Activated CD4-positive, alpha-beta memory T cell treated with anti-CD3 and anti-CD28 coated beads, Interleukin-2, amount 10 ng/mL, durations not matched to agents 7 days and 5 days (primary cell): ENCODE measurements at regions of chr19 and their contacts with region 1.

Region 1: DNA sequence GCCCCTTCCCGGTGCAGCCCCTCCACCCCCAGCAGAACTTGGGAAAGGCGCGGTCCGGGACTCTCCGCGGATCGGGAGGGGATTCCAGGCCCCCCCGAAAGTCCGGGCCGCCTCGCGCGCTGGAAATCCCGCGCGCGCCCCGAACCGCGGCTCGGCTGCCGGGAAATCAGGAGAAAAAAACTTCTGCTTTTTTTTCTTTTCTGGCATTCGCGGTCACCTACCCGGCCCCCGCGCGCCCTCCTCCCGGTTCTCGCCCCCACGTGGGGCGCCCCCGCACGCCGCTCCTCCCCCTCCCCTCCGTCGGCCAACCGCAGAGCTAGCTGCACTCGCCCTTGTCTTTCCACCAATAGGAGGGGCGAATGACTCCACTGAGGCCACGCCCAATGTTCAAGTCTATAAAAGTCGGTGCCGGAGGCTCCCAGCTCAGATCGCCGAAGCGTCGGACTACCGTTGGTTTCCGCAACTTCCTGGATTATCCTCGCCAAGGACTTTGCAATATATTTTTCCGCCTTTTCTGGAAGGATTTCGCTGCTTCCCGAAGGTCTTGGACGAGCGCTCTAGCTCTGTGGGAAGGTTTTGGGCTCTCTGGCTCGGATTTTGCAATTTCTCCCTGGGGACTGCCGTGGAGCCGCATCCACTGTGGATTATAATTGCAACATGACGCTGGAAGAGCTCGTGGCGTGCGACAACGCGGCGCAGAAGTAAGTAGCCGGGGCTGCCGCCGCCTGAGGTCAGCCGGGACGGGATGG is at the start of gene GADD45B:
- DNase-seq: peak; percentile 96
- H3K4me3 Mint-ChIP-seq: peak within 1 kb of the TSS; percentile 89
- H3K27ac Mint-ChIP-seq: peak within 1 kb of the TSS; percentile 83
- H3K4me1 Mint-ChIP-seq: peaks cover 22% of the 10 kb centered on the region
- H3K27me3 Mint-ChIP-seq: peaks cover 3% of the 10 kb centered on the region
- total RNA-seq, gene GADD45B: 52.2 to 54.3 TPM

Region 2: DNA sequence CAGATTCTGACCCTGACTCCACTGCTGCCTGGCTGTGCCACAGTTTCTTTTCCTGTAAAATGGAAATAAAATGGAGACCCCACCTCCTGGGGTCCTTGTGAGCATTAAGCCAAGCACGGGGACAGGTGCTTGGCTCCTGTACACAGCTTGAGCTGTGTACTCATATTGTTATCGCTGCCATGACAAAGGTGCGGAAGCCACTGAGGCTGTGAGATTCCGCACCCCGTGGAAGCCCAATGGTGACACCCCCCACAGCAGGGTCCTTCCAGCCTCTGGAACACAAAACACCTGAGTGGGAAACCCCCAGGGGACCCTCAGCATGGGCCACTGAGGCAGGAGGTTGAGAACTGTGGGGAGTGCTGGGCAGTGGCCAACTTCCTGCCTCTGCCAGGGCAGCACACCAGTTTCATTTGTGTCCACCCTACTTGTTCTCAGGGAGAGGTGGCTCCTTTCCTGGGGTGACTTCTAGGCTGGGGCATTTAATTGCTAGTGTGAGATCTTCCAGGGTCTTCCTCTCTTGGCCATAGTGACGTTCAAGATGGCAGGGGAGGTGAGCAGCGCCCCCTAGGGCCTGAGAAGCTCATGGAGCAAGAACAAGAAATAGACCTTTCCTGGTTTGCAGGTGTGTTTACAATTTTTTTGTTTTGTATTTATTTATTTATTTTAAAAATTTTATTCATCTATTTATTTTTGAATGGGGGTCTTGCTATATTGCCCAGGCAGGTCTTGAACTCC is 214.3 kb before region 1 on chr19:
- CTCF ChIA-PET with region 1: no interaction called
- POLR2A ChIA-PET with region 1: no interaction called
- DNase-seq: peak; percentile 76
- H3K4me3 Mint-ChIP-seq: no peak overlapping the region
- H3K27ac Mint-ChIP-seq: peak overlapping the region; percentile 48
- H3K4me1 Mint-ChIP-seq: peaks cover 41% of the 10 kb centered on the region
- H3K27me3 Mint-ChIP-seq: no peaks in the 10 kb centered on the region

Region 3: DNA sequence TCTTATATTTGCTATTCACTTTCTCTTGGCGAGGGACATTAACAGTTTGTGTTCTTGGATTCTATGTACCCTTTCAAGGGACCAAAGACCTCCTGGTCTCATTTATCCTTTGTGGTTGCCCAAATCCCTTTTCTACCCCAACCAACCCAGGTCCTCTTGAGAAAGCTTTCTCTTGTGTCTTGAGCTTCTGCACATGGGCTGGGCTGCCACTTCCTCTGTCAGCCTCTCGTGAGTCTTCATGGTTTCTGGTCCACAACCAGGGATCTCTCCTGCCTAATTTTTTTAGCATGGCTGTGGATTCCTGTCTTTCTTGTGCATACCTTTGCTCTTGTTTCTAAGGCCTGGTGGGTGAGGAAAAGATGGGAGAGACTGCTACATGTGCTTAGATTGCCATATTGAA is 63.4 kb before region 1 on chr19:
- CTCF ChIA-PET with region 1: no interaction called
- POLR2A ChIA-PET with region 1: no interaction called
- DNase-seq: no peak
- H3K4me3 Mint-ChIP-seq: no peak overlapping the region
- H3K27ac Mint-ChIP-seq: no peak overlapping the region
- H3K4me1 Mint-ChIP-seq: no peaks in the 10 kb centered on the region
- H3K27me3 Mint-ChIP-seq: peaks cover 5% of the 10 kb centered on the region

Region 4: DNA sequence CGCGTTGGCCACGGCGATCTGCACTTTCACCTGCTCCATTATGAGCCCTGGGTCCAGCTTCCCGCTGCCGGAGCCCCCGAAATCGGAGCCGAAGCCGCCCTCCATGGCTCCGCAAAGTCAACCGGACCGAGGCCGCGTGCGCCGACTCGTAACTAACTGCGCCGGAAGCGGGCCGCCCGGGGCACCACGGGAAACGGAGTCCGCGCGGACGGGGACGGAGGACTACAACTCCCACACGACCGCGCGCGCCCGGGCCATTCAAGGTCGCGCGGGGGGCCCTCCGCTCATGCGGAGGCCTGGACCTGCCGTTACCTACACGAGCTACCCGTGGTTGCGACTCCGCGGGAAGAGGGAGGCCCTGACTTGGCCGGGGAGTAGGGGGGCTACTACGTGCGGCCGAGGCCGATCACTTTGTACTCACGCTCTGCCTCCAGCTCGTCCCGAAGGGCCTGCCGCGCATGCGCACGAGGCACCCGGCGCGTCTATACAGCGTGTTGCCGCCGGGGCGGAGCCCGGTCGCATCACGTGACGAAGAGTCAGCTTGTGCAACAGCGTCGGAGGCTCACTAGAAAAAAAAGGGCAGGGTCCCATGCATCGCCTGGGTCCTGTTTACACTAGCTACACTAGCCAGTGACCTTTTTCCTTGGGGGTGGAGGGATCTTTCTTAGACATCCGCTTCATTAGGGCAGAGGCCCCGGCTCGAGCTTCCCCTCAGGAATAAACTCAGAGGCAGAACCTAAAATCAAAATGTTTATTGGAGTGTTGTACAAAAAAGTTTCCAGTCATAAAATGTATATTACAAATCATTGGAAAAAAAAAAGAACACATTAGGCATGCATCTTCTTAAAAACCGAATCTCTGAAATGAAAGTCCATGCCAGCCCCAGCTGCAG is 48.2 kb before region 1 on chr19 and contains the start of gene TIMM13:
- CTCF ChIA-PET with region 1: no interaction called
- POLR2A ChIA-PET with region 1: interaction called, 18 read pairs
- DNase-seq: peak; percentile 97
- H3K4me3 Mint-ChIP-seq: peak within 1 kb of the TSS; percentile 84
- H3K27ac Mint-ChIP-seq: peak within 1 kb of the TSS; percentile 85
- H3K4me1 Mint-ChIP-seq: peaks cover 17% of the 10 kb centered on the region
- H3K27me3 Mint-ChIP-seq: no peaks in the 10 kb centered on the region
- total RNA-seq, gene TIMM13: 44.5 to 47.4 TPM

Region 5: DNA sequence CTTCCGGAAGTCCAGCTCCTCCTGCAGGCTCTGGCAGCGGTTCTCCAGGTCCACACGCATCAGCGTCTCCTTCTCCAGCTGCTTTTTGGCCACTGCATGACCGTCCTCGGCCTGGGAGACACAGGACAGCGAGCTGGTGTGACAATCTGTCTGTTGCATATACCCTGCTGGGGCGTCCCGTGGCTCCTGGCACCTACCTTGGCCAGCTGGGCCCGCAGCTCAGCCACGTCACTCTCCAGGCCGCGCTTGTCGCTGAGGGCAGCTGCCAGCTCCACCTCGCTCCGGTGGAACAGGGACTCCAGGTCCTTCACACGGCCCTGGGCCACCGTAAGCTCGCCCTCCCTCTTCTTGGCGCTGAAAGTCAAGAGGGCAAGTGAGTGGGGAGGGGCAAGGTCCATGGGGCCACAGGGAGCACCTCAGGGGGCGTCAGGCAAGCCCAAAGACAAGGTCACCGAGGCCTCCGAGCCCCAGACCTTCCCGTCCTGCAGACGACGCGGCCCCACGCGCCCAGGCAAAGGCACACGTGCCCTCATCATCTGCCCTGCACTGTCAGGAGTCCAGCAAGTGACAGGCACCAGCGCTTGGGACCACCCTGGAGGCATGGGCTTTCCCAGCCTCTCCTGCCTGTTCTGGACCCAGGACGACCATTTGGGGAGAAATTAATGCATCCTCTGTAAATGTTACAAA is 37.6 kb before region 1 on chr19:
- CTCF ChIA-PET with region 1: no interaction called
- POLR2A ChIA-PET with region 1: no interaction called
- DNase-seq: no peak
- H3K4me3 Mint-ChIP-seq: no peak overlapping the region
- H3K27ac Mint-ChIP-seq: no peak overlapping the region
- H3K4me1 Mint-ChIP-seq: peaks cover 2% of the 10 kb centered on the region
- H3K27me3 Mint-ChIP-seq: no peaks in the 10 kb centered on the region

Region 6: DNA sequence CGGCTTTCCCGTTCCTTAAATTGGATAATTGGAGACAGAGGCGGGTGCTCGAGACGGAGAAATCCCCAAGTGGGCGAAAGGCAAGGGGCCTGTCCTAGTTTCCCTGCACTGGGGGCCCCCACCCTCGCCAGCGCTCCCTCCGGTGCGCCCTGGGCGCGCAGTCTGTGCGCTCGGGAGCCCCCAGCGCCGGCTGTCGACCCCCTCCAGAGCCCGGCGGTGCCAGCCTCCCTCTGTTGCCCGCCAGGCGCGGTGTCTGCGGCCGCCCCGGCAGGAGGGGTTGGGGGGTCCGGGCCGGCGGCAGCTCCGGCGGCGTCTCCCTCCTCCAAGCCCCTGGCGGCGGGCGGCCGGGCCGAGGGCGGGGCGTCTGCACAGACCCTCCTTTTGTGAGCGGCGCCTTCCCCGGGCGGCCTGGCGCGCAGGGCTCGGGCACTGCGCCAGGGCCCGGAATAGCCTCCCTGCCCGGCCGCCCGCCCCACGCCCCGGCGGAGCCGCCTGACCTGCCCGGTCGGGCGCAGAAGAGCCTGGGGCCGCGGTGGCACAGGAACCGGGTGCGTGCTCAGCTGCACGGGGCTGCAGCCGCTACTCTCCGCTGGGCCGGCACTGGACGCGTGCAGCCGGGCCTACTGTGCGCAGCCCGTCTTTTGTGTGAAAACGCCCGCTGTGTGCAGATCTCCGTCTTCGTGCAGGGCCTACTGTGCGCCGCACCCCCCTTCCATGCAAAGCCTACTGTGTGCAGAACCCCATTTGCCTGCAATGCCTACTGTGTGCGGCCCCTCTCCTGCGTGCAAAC is 13.3 kb after region 1 on chr19:
- CTCF ChIA-PET with region 1: interaction called, 8 read pairs
- POLR2A ChIA-PET with region 1: interaction called, 127 read pairs
- DNase-seq: no peak
- H3K4me3 Mint-ChIP-seq: no peak overlapping the region
- H3K27ac Mint-ChIP-seq: no peak overlapping the region
- H3K4me1 Mint-ChIP-seq: peaks cover 31% of the 10 kb centered on the region
- H3K27me3 Mint-ChIP-seq: peaks cover 63% of the 10 kb centered on the region

Region 7: GRCh38 chr19:2529473-2529918 is 53.6 kb after region 1 on chr19:
- CTCF ChIA-PET with region 1: interaction called, 3 read pairs
- POLR2A ChIA-PET with region 1: interaction called, 15 read pairs
- DNase-seq: no peak
- H3K4me3 Mint-ChIP-seq: no peak overlapping the region
- H3K27ac Mint-ChIP-seq: no peak overlapping the region
- H3K4me1 Mint-ChIP-seq: peaks cover 17% of the 10 kb centered on the region
- H3K27me3 Mint-ChIP-seq: peaks cover 7% of the 10 kb centered on the region

Region 8: GRCh38 chr19:2552859-2553258 is 77.0 kb after region 1 on chr19:
- CTCF ChIA-PET with region 1: interaction called, 26 read pairs
- POLR2A ChIA-PET with region 1: interaction called, 73 read pairs
- DNase-seq: peak; percentile 76
- H3K4me3 Mint-ChIP-seq: peak overlapping the region; percentile 61
- H3K27ac Mint-ChIP-seq: peak overlapping the region; percentile 93
- H3K4me1 Mint-ChIP-seq: peaks cover 39% of the 10 kb centered on the region
- H3K27me3 Mint-ChIP-seq: peaks cover 3% of the 10 kb centered on the region

Region 9: GRCh38 chr19:2602391-2603181 is 126.7 kb after region 1 on chr19:
- CTCF ChIA-PET with region 1: interaction called, 130 read pairs
- POLR2A ChIA-PET with region 1: interaction called, 141 read pairs
- DNase-seq: no peak
- H3K4me3 Mint-ChIP-seq: no peak overlapping the region
- H3K27ac Mint-ChIP-seq: no peak overlapping the region
- H3K4me1 Mint-ChIP-seq: peaks cover 14% of the 10 kb centered on the region
- H3K27me3 Mint-ChIP-seq: peaks cover 8% of the 10 kb centered on the region

Region 10: GRCh38 chr19:2627319-2627829 is 151.5 kb after region 1 on chr19:
- CTCF ChIA-PET with region 1: interaction called, 32 read pairs
- POLR2A ChIA-PET with region 1: interaction called, 220 read pairs
- DNase-seq: peak; percentile 46
- H3K4me3 Mint-ChIP-seq: no peak overlapping the region
- H3K27ac Mint-ChIP-seq: peak overlapping the region; percentile 64
- H3K4me1 Mint-ChIP-seq: peaks cover 21% of the 10 kb centered on the region
- H3K27me3 Mint-ChIP-seq: no peaks in the 10 kb centered on the region

Region 11: DNA sequence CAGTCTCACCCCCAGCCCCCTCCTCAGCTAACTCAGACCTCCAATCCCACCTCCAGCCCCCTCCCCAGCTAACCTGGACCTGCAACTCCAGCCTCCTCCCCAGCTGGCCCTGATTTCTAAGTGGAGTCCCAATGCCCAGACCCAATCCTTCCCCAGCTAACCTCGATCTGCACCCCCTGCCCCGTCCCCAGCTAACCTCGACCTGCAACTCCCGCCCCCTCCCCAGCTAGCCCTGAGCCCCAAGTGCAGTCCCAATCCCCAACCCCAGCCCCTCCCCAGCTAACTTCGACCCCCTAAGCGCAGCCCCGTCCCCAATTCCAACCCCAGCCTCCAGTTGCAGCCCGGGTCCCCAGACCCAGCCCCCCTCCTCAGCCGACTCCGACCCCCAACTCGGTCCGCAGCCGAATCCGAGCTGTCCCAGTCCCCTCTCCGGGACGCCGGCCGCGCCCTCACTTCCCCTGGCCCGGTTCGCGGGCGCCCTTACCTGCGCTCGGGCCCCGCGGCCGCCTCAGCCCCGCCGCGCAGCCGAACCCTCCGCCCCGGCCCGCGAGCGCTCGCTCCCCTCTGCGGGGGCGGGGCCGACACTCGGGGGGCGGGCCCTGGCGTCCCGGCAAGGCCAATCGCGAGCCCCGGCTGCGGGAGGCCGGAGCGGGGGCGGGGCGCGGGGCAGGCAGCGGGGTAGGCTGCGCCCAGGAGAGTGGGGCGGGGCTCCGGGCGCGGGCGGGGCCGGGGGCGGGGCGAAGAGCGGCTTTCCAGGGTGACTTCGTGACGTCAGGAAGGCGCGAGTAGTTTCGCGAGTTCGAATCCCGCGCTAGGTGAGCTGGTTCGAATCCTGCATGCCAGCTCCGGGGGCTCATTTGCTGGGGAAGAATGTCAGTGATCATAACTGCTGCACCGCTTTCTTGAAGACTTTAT is 226.5 kb after region 1 on chr19 and contains the start of gene GNG7:
- CTCF ChIA-PET with region 1: no interaction called
- POLR2A ChIA-PET with region 1: no interaction called
- DNase-seq: peak; percentile 92
- H3K4me3 Mint-ChIP-seq: no peak within 1 kb of the TSS
- H3K27ac Mint-ChIP-seq: no peak within 1 kb of the TSS
- H3K4me1 Mint-ChIP-seq: peaks cover 10% of the 10 kb centered on the region
- H3K27me3 Mint-ChIP-seq: peaks cover 7% of the 10 kb centered on the region
- total RNA-seq, gene GNG7: 0.25 to 0.40 TPM